Motor neuron (in vitro differentiated cells): ENCODE measurements at regions of chr11 and their contacts with region 1.

Region 1: DNA sequence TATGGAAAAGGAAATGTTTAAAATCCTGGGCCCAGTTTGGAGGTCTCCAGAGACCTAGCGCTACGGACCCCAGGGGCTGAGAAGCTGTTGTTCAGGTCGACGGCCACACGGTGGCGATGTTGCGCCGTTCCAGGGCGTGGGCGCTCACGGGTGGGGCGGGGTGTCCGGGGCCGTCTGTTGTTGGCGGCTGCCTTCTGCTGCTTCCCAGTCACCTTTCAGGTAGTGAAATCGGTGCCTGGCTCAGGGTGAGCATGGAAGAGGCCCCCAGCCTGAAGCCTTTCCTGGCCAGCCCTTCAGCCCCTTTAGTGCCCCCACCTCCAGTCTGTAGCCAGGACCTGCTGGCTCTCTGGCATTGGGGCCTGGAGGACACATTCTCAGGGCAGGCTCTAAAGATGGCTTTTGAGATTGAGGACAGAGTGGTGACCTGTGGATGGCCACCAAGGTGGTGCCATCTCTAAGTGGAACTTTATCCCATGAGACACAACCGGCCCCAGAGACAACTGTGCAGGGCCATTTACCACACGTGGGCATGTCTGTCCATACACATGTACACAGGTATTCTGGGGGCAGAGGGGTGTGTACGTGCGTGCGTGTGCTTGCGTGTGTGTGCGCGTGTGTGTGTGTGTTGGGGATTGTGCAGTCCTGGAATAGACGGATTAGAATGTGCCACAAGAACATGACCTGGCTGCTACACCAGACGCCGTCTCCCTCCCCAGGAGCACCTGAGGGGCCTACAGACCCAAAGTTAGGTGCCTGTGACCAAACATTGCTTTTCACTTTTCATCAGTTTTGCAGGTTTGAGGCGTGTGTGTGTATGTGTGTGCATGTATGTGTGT is 53.8 kb downstream of the ST14 start:
- ATAC-seq: peak; percentile 70 to 92 (median 90)
- H3K4me3 ChIP-seq: peak overlapping the region in 1 of 5 donors; percentile 8
- H3K27ac ChIP-seq: no peak overlapping the region
- H3K4me1 ChIP-seq: no peaks in the 10 kb centered on the region

Region 2: GRCh38 chr11:130403271-130403804 is 190.0 kb after region 1 on chr11:
- in situ Hi-C with region 1: loop called in 3 of 9 experiments (anchors 25 kb)
- ATAC-seq: peak in 7 of 8 experiments; percentile 59 to 93 (median 69)
- H3K4me3 ChIP-seq: no peak overlapping the region
- H3K27ac ChIP-seq: no peak overlapping the region
- H3K4me1 ChIP-seq: peaks cover 0 to 4% of the 10 kb centered on the region in 2 donors

Region 3: GRCh38 chr11:130427581-130428315 is 214.4 kb after region 1 on chr11:
- in situ Hi-C with region 1: loop called in 4 of 9 experiments (anchors 10 to 25 kb)
- ATAC-seq: peak; percentile 13 to 66 (median 49)
- H3K4me3 ChIP-seq: peak overlapping the region; percentile 27 to 45 (median 38)
- H3K27ac ChIP-seq: no peak overlapping the region
- H3K4me1 ChIP-seq: peaks cover 3 to 7% of the 10 kb centered on the region in 2 donors

Region 4: GRCh38 chr11:130861902-130862860 is 648.8 kb after region 1 on chr11:
- in situ Hi-C with region 1: loop called in 1 of 9 experiments (anchors 25 kb)
- ATAC-seq: peak; percentile 80 to 97 (median 94)
- H3K4me3 ChIP-seq: peak overlapping the region in 2 of 5 donors; percentile 2 to 12
- H3K27ac ChIP-seq: no peak overlapping the region
- H3K4me1 ChIP-seq: no peaks in the 10 kb centered on the region

Region 5: GRCh38 chr11:130894322-130895025 is 681.1 kb after region 1 on chr11:
- in situ Hi-C with region 1: loop called in 2 of 9 experiments (anchors 25 kb)
- ATAC-seq: peak; percentile 10 to 88 (median 75)
- H3K4me3 ChIP-seq: no peak overlapping the region
- H3K27ac ChIP-seq: no peak overlapping the region
- H3K4me1 ChIP-seq: peaks cover 6 to 10% of the 10 kb centered on the region in 2 donors